Right cardiac atrium (tissue), 5 donors: ENCODE measurements at regions of chr16 and their contacts with region 1.

Region 1: DNA sequence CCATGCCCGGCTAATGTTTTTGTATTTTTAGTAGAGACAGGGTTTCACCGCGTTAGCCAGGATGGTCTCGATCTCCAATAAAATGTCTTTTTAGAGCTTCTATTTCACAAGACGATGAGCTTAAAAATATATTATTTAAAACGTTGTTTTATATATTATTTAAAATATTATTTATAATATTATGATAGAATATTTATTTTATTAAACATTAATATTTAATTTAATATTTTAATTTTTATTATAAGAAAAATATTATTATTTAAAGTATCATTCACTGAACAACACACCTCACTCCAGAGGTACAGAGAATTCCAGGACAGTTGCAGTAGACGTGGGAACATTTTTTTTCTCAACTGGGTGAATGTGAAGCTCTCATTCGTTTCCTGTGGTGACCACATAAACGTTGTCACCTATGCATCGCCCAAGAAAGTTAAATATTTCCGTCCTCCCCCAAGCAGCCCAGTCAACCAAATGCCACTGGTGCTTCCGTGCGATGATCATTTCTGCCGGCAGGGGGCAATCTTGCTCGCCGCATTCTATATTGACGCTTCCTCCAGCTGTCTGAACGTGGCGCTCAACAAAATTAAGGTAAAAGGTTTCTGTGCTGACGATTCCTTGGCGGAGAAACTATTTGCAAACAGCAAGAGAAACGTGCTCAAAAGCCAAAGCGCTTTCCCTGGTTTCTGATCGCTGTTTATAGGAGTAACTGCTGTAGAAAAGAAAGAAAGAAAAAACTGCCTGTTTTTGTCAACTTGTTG is 41.7 kb upstream of the PRSS54 start:
- DNase-seq: peak; percentile 69 to 92 (median 89)
- ATAC-seq: peak; percentile 72 to 79
- H3K4me3 ChIP-seq: peak overlapping the region; percentile 36
- H3K27ac ChIP-seq: no peak overlapping the region
- H3K4me1 ChIP-seq: no peaks in the 10 kb centered on the region
- H3K27me3 ChIP-seq: no peaks in the 10 kb centered on the region

Region 2: GRCh38 chr16:58399718-58400633 is 63.5 kb after region 1 on chr16:
- intact Hi-C with region 1: no loop called
- DNase-seq: no peak
- ATAC-seq: no peak
- H3K4me3 ChIP-seq: no peak overlapping the region
- H3K27ac ChIP-seq: no peak overlapping the region
- H3K4me1 ChIP-seq: no peaks in the 10 kb centered on the region
- H3K27me3 ChIP-seq: no peaks in the 10 kb centered on the region

Region 3: DNA sequence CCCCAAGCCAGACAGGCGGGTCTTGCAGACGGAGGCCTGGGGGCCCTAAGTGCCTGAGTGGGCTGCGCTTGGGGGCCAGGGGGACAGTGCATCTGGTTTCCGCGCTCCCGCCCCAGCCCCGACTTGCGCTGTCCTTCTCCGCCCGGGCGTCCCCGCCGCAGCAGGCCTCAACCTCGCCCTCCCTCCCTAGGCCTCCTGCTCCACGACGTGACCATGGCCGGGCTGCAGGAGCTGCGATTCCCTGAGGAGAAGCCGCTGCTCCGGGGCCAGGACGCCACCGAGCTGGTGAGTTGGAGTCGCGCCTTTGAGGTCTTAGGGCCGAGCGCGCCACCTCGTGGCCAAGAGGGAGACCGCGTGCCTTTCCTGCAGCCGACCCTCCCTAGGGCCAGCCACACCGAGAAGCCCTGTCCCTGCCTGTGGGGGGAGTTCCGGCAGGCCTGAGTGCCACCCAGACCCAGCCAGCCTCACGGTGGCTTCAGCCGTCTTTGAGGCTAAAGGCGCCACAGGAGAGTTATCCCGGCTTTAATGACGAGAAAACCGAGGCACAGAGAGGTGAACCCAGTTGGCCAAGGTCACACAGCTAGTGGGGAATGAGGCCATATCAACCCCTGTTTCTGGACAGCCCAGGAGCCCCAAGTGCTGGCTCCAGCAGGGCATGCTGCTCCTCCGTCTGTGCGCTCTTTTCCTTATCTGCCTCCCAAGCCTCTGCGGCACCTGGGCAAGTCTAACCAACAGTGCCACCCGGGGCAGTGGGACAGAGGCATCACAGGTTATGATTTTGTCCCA is 151.2 kb after region 1 on chr16:
- intact Hi-C with region 1: loop called (anchors 2 to 5 kb)
- DNase-seq: peak; percentile 89 to 95 (median 94)
- ATAC-seq: peak; percentile 78 to 88
- H3K4me3 ChIP-seq: no peak overlapping the region
- H3K27ac ChIP-seq: no peak overlapping the region
- H3K4me1 ChIP-seq: peaks cover 3% of the 10 kb centered on the region
- H3K27me3 ChIP-seq: no peaks in the 10 kb centered on the region

Region 4: DNA sequence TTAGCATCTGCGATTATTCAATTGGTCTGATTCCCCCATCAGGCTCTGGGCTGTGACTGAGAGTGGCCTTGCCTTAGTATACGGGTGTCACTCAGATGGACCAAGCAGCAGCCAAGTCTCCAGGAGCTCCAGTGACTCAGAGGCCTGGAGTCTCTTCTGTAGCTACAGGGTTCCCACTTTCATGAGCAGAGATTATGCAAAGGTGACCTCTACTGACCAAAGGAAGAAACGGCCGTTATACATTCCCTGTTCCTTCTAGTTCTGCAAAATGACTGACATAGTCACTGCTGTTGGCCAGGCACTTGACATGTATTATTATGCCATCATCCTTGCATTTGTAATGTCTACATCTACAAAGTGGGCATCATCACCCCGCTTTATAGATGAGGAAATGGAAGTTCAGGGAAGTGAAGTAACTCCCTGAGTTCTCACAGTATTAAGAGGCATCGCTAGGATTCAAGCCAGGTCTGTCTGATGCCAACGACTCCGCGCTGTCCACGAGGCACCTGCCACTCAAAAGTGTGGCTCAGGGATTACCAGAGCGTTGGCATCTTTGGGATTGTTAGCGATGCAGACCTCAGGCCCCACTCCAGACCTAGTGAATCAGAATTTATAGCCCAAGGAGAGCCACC is 324.8 kb after region 1 on chr16:
- intact Hi-C with region 1: loop called in 2 of 4 experiments (anchors 10 kb)
- DNase-seq: peak; percentile 45 to 66 (median 53)
- ATAC-seq: peak; percentile 91 to 93
- H3K4me3 ChIP-seq: no peak overlapping the region
- H3K27ac ChIP-seq: no peak overlapping the region
- H3K4me1 ChIP-seq: no peaks in the 10 kb centered on the region
- H3K27me3 ChIP-seq: no peaks in the 10 kb centered on the region